Endothelial cell of umbilical vein (primary cell): ENCODE measurements at regions of chr2 and their contacts with region 1.

Region 1: DNA sequence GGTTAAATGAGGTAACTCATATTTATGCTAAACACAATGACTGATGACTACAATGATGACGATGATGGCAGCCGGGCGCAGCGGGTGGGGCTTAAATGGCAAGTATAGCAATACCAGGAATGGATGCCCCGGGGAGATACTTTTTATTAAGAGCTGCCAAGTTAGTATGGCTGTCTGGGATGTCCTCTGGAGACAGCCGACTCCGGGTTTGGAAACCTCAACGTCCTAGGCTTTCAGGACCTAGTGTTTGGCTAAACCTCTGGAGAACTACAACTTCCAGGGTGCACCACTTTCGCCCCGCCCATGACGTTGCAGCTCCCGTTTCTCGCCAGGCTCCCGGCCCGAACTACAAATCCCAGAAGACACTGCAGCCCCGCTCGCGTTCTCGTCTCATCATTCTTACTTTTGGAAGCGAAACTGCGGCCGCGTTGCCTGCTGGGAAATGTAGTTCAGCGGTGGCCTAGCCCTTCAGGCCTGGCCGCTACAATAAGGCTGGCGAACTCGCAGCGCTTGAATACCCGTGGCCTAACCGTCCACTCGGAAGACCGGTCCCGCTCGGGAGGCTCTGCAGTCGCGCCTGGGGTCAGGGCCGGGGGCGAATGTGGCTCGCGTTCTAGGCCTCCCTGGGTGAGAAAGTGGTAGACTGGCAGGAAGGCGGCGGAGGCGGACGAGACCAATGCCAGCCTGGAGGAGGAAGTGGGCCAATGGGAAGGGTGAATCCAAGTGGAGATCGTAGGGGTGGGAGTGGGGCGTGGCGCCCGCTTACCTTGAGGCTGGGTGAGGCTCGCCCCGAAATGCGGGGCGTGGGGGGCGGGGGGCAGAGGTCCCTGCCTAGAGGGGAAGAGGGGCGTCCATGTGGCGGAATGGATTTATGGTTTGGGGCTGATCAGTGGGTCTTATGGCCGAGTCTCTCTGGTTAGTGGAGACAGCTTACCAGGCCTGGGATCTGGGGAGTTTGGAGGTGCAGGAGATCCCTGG is at the start of gene SMARCAL1:
- DNase-seq: peak; percentile 99
- H3K4me3 ChIP-seq: peak within 1 kb of the TSS; percentile 29 to 64 (median 54)
- H3K27ac ChIP-seq: peak within 1 kb of the TSS; percentile 66
- H3K4me1 ChIP-seq: peaks cover 4% of the 10 kb centered on the region
- H3K27me3 ChIP-seq: no peaks in the 10 kb centered on the region
- CTCF ChIP-seq: no peak
- POLR2A ChIP-seq: peak; percentile 83
- total RNA-seq, gene SMARCAL1: 28.2 and 30.7 TPM in 2 replicates

Region 2: GRCh38 chr2:216114714-216115557 is 297.4 kb before region 1 on chr2:
- CTCF ChIA-PET with region 1: no interaction called
- POLR2A ChIA-PET with region 1: no interaction called
- dilution Hi-C with region 1: no loop called
- intact Hi-C with region 1: loop called (anchors 1 kb)
- DNase-seq: peak; percentile 100
- H3K4me3 ChIP-seq: peak overlapping the region; percentile 33 to 80 (median 35)
- H3K27ac ChIP-seq: peak overlapping the region; percentile 87
- H3K4me1 ChIP-seq: peaks cover 26% of the 10 kb centered on the region
- H3K27me3 ChIP-seq: no peaks in the 10 kb centered on the region
- CTCF ChIP-seq: peak; percentile 84 to 95
- POLR2A ChIP-seq: peak; percentile 86

Region 3: GRCh38 chr2:216149741-216150140 is 262.6 kb before region 1 on chr2:
- CTCF ChIA-PET with region 1: no interaction called
- POLR2A ChIA-PET with region 1: no interaction called
- dilution Hi-C with region 1: no loop called
- intact Hi-C with region 1: loop called (anchors 5 kb)
- DNase-seq: peak; percentile 48
- H3K4me3 ChIP-seq: no peak overlapping the region
- H3K27ac ChIP-seq: peak overlapping the region; percentile 42
- H3K4me1 ChIP-seq: peaks cover 27% of the 10 kb centered on the region
- H3K27me3 ChIP-seq: no peaks in the 10 kb centered on the region
- CTCF ChIP-seq: no peak
- POLR2A ChIP-seq: no peak

Region 4: DNA sequence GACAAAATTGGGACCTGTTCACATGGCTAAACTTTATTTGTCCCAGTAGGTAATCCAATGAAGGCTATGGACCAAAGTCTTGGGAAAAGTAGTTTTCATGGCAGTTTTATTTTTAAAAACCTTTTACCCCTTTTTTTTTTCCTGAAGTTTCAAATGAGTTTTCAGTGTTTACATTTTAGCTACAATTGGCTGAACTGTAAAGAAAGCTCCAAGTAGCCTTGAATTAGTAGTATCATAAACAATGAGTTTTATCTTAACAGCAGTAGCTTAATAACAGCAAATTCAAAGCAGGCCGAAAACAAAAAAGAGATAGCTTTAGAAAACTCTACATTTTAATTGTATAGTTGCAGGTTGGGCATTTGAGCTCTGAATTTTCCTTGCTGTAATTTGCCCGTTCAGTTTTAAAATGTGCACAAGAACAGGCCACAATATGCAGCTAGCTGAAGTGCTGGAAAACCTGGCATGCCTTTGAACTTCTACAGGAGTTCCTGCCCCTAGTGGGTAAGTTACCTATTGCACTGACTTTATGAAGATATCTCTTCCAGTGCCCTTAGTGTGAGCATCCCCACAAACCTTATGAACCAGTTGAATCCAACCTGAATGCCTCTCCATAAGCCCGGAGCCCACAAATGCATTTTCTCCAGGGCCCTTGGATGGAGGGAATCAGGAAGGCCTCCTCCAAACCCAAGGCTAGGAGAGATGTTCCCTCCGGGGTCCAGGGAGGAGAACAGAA is 196.5 kb before region 1 on chr2:
- CTCF ChIA-PET with region 1: no interaction called
- POLR2A ChIA-PET with region 1: no interaction called
- dilution Hi-C with region 1: no loop called
- intact Hi-C with region 1: loop called (anchors 2 kb)
- DNase-seq: no peak
- H3K4me3 ChIP-seq: no peak overlapping the region
- H3K27ac ChIP-seq: no peak overlapping the region
- H3K4me1 ChIP-seq: peaks cover 32% of the 10 kb centered on the region
- H3K27me3 ChIP-seq: no peaks in the 10 kb centered on the region
- CTCF ChIP-seq: peak; percentile 20 to 23
- POLR2A ChIP-seq: no peak